HEK293 (cell line): ENCODE measurements at regions of chr2 and their contacts with region 1.

Region 1: DNA sequence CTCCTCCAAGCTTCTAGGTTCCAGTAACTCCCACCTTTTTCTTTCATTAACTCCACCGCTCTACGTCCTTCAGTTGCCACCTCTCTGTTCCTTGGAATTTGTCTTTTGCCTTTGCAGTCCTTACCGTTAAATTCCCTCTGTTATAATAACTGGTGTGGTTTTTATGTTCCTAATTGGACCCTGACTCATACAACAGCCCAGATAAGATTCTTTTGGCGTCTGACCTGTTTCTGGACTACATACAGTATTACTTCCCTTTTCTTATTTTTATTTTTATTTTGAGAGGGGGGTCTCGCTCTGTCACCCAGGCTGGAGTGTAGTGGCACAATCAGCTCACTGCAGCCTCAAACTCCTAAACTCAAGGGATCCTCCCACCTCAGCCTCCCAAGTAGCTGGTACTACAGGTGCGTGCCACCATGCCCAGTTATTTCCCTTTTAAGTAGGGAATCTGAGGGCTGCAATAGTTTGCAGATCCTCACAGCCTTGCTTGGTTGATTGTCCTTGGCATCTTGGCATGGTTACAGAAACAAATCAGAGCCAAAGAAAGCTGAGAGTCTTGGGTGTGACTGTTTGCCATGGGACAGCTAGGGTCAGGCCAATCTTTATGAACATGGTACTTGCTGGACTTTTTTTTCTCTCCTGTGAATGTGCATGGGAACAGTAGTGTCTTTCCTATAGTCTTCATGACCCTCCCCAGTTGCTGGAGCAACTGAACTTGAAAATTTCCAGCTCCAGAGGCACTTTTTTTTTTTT is 22.0 kb downstream of the TCF23 start:
- H3K4me3 ChIP-seq: no peak overlapping the region
- H3K27ac ChIP-seq: no peak overlapping the region
- H3K4me1 ChIP-seq: no peaks in the 10 kb centered on the region
- CTCF ChIP-seq: no peak

Region 2: GRCh38 chr2:27152786-27153510 is 17.8 kb before region 1 on chr2:
- CTCF ChIA-PET with region 1: interaction called, 22 read pairs
- POLR2A ChIA-PET with region 1: interaction called, 3 read pairs
- H3K4me3 ChIP-seq: no peak overlapping the region
- H3K27ac ChIP-seq: no peak overlapping the region
- H3K4me1 ChIP-seq: no peaks in the 10 kb centered on the region
- CTCF ChIP-seq: no peak

Region 3: GRCh38 chr2:27159271-27159670 is 11.5 kb before region 1 on chr2:
- CTCF ChIA-PET with region 1: interaction called, 22 read pairs
- POLR2A ChIA-PET with region 1: no interaction called
- H3K4me3 ChIP-seq: no peak overlapping the region
- H3K27ac ChIP-seq: no peak overlapping the region
- H3K4me1 ChIP-seq: no peaks in the 10 kb centered on the region
- CTCF ChIP-seq: no peak

Region 4: DNA sequence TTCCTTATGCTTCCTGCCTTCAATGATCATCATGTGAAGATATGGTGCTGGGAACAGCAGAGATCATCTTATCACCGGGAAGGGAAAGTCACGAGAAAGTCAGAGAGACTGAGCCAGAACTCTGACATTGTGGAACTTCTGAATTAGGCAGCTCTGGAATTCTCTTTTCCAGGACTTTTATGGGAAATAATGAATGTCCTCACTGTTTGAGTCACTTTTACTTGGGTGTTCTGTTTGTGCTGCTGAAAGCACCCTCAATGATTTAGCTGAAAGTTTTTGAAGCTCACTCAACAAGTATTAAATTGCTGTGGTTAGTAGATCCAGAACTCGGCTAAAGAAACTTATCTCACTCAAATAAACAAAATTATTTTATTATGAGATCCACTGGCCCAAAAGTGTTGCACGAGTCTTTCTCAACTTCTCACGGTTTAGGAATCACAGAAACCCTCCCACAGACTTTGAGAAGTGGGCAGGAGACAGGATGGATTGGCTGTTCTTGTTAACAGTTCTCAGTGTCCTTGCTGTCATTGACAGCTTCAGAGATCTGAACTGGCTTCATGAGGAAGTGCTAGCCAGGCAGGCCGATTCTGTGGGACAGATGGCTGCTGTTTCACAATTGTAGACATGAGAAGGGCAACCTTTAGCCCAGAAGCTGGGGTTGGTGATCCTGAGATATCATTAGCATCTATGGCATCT is 14.7 kb after region 1 on chr2:
- CTCF ChIA-PET with region 1: interaction called, 15 read pairs
- POLR2A ChIA-PET with region 1: no interaction called
- H3K4me3 ChIP-seq: no peak overlapping the region
- H3K27ac ChIP-seq: no peak overlapping the region
- H3K4me1 ChIP-seq: peaks cover 4% of the 10 kb centered on the region; the same call in 1 of the 2 replicates
- CTCF ChIP-seq: no peak